Heart right ventricle (tissue), 16 donors: ENCODE measurements at regions of chr10 and their contacts with region 1.

Region 1: GRCh38 chr10:92662848-92663247 is 26.9 kb upstream of the HHEX start:
- DNase-seq: no peak
- ATAC-seq: no peak
- H3K4me3 ChIP-seq: no peak overlapping the region
- H3K27ac ChIP-seq: no peak overlapping the region
- H3K4me1 ChIP-seq: no peaks in the 10 kb centered on the region
- H3K27me3 ChIP-seq: no peaks in the 10 kb centered on the region
- CTCF ChIP-seq: no peak

Region 2: GRCh38 chr10:91462423-91462822 is 1200.4 kb before region 1 on chr10:
- intact Hi-C with region 1: loop called in 1 of 10 experiments (anchors 10 kb)
- DNase-seq: no peak
- ATAC-seq: no peak
- H3K4me3 ChIP-seq: no peak overlapping the region
- H3K27ac ChIP-seq: no peak overlapping the region
- H3K4me1 ChIP-seq: no peaks in the 10 kb centered on the region
- H3K27me3 ChIP-seq: no peaks in the 10 kb centered on the region
- CTCF ChIP-seq: no peak

Region 3: DNA sequence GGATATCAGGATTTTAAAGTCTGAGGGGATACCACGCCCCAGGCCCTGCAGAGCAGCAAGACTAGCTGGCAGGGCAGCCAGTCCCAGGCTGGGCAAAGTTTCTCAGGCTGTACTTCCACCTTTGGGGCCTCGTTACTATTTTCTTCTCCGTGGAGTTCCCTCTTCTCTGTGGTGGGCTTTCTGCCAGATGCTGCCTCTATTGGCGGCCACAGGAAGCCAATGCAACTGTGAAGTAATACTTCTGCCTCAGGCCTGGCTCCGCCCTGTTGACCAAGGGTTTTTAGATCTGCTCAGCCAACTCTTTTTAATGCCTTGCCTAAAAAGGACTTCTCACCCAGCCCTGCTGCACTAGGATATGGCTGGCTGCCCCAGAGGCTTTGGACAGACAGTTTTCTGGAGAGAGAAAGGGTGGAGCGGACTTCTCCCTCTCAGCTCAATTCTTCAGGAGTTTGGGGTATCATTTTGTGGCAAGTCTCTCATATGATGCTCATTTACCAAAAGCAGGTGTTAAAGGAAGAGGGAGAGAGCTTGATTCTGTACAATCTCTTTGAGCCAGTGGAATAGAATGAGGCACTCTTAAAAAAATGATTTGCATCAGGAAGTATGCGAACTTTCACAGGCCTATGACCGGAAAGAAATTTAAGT is 94.3 kb after region 1 on chr10:
- intact Hi-C with region 1: no loop called
- DNase-seq: peak; percentile 74 to 86
- ATAC-seq: peak; percentile 88 to 97 (median 95)
- H3K4me3 ChIP-seq: peak overlapping the region in 3 of 10 donors; percentile 5 to 8 (median 8)
- H3K27ac ChIP-seq: peak overlapping the region in 9 of 10 donors; percentile 50 to 79 (median 69)
- H3K4me1 ChIP-seq: peaks cover 3 to 74% (median 23%) of the 10 kb centered on the region in 9 donors
- H3K27me3 ChIP-seq: no peaks in the 10 kb centered on the region
- CTCF ChIP-seq: peak in 7 of 9 donors; percentile 14 to 39 (median 31)